ENCODE measurements at regions of chr4 and their contacts with region 1.

Region 1: GRCh38 chr4:12488672-12489071 is 995.5 kb downstream of the RAB28 start:
- DNase-seq: peak; percentile 64 to 89 (median 78)
- ATAC-seq: peak; percentile 97 to 99 (median 98)
- H3K4me3 ChIP-seq: no peak overlapping the region
- H3K27ac ChIP-seq: peak overlapping the region in 11 of 12 donors; percentile 30 to 86 (median 63)
- H3K4me1 ChIP-seq: peaks cover 0 to 8% (median 0%) of the 10 kb centered on the region in 12 donors
- H3K27me3 ChIP-seq: no peaks in the 10 kb centered on the region
- CTCF ChIP-seq: no peak
- POLR2A ChIP-seq: no peak

Region 2: GRCh38 chr4:12050357-12050756 is 438.3 kb before region 1 on chr4:
- intact Hi-C with region 1: no loop called
- DNase-seq: no peak
- ATAC-seq: no peak
- H3K4me3 ChIP-seq: no peak overlapping the region
- H3K27ac ChIP-seq: no peak overlapping the region
- H3K4me1 ChIP-seq: no peaks in the 10 kb centered on the region
- H3K27me3 ChIP-seq: no peaks in the 10 kb centered on the region
- CTCF ChIP-seq: no peak
- POLR2A ChIP-seq: no peak

Region 3: GRCh38 chr4:12071316-12071715 is 417.4 kb before region 1 on chr4:
- intact Hi-C with region 1: no loop called
- DNase-seq: no peak
- ATAC-seq: no peak
- H3K4me3 ChIP-seq: no peak overlapping the region
- H3K27ac ChIP-seq: no peak overlapping the region
- H3K4me1 ChIP-seq: peaks cover 0 to 2% (median 0%) of the 10 kb centered on the region in 12 donors
- H3K27me3 ChIP-seq: no peaks in the 10 kb centered on the region
- CTCF ChIP-seq: no peak
- POLR2A ChIP-seq: no peak

Region 4: DNA sequence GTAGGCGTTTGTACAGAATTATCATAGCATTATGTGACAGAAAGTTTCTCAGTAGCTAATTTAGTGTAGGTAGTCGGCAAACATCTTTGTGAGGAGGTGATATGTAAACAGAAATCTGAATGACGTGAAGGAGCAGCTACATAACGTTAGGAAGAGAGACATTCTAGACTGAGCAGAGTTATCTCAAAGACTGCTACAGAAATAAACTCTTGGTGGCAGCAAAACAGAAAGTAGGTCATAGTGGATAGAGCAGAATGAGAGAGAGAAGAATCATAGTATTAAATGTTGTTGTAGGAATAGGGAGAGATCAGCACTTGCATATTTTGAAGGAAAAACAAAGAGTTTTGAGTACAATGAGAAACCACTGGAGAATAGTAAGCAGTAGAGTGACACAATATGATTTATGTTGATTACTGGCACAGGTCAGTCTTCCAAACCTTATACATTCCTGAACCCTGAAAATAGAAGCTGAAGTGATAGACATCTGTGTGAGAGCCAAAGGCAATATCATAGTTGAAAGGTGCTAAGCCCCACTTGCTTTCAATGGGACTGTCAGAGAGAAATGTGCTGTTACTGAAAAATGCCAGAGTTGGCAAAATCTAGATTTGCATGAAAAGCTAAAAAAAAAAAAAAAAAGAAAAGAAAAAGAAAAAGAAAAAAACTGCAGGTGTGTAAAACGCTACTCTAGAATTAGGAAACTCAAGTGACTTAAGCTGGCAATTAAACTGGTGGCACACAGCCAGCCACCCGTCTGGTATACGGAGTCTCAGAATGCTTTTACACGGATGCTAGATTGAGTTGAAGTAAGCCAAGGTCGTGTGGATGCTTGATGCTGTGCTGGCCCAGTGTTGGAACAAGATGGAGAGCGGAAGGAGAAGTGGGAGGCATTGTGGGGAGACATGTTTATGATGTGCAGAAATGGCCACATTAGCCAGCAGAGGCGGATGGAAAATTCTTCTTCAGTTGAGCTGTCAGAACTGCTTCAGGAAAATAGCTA is 309.8 kb before region 1 on chr4:
- intact Hi-C with region 1: loop called in 2 of 10 experiments (anchors 10 kb)
- DNase-seq: peak in 3 of 5 donors; percentile 30 to 51 (median 35)
- ATAC-seq: peak in 3 of 4 donors; percentile 62 to 74 (median 65)
- H3K4me3 ChIP-seq: no peak overlapping the region
- H3K27ac ChIP-seq: peak overlapping the region in 2 of 12 donors; percentile 7 to 22
- H3K4me1 ChIP-seq: peaks cover 0 to 4% (median 0%) of the 10 kb centered on the region in 12 donors
- H3K27me3 ChIP-seq: no peaks in the 10 kb centered on the region
- CTCF ChIP-seq: peak in 1 of 12 donors; percentile 12
- POLR2A ChIP-seq: no peak

Region 5: GRCh38 chr4:12231098-12231497 is 257.6 kb before region 1 on chr4:
- intact Hi-C with region 1: loop called in 2 of 10 experiments (anchors 1 to 10 kb)
- DNase-seq: no peak
- ATAC-seq: peak; percentile 54 to 92 (median 78)
- H3K4me3 ChIP-seq: no peak overlapping the region
- H3K27ac ChIP-seq: peak overlapping the region in 2 of 12 donors; percentile 40 to 66
- H3K4me1 ChIP-seq: peaks cover 0 to 6% (median 0%) of the 10 kb centered on the region in 12 donors
- H3K27me3 ChIP-seq: no peaks in the 10 kb centered on the region
- CTCF ChIP-seq: no peak
- POLR2A ChIP-seq: no peak

Region 6: DNA sequence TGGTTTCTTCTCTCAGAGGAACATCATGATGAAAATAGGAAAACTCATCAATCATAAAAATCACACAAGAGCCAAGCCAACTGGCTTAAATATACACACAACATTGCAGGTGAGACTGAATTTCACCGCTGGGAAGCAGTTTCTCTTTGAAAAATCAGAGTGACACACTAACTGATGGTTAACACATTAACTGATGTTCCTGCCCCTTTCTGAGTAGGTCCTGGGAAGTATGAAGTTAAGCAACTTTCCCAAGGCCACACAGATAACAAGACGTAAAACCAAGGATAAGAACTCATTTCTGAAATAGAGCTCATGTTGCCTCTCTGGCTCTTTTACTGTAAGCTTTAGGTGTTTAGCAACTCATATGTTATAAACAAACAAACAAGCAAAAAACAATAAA is 246.3 kb before region 1 on chr4:
- intact Hi-C with region 1: loop called in 4 of 10 experiments (anchors 2 to 10 kb)
- DNase-seq: no peak
- ATAC-seq: no peak
- H3K4me3 ChIP-seq: no peak overlapping the region
- H3K27ac ChIP-seq: no peak overlapping the region
- H3K4me1 ChIP-seq: peaks cover 0 to 16% (median 0%) of the 10 kb centered on the region in 12 donors
- H3K27me3 ChIP-seq: no peaks in the 10 kb centered on the region
- CTCF ChIP-seq: no peak
- POLR2A ChIP-seq: no peak

Region 7: DNA sequence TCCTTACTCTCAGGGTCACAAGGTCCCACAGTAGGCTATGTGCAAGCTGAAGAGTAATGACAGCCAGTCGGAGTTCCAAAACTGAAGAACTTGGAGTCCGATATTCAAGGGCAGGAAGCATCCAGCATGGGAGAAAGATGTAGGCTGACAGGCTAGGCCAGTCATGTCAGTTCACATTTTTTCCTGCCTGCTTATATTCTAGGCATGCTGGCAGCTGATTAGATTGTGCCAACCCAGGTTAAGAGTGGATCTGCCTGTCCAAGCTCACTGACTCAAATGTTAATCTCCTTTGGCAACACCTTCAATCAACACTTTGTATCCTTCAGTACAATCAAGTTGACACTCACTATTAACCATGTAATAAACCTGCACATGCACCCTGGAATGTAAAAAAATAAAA is 99.1 kb before region 1 on chr4:
- intact Hi-C with region 1: loop called in 1 of 10 experiments (anchors 1 kb)
- DNase-seq: peak in 1 of 5 donors; percentile 30
- ATAC-seq: peak; percentile 26 to 93 (median 72)
- H3K4me3 ChIP-seq: no peak overlapping the region
- H3K27ac ChIP-seq: peak overlapping the region in 2 of 12 donors; percentile 29 to 37
- H3K4me1 ChIP-seq: peaks cover 0 to 6% (median 0%) of the 10 kb centered on the region in 12 donors
- H3K27me3 ChIP-seq: no peaks in the 10 kb centered on the region
- CTCF ChIP-seq: no peak
- POLR2A ChIP-seq: no peak

Measured in heart left ventricle (tissue), 16 donors.